Cardiac septum (tissue), 1 donor: ENCODE measurements at regions of chr3 and their contacts with region 1.

Region 1: GRCh38 chr3:112642912-112643506 is 2.1 kb upstream of the CCDC80 start:
- DNase-seq: peak; percentile 89

Region 2: GRCh38 chr3:112582244-112582874 is 60.6 kb before region 1 on chr3:
- intact Hi-C with region 1: loop called (anchors 5 kb)
- DNase-seq: no peak

Region 3: GRCh38 chr3:112605285-112605684 is 37.7 kb before region 1 on chr3:
- intact Hi-C with region 1: no loop called
- DNase-seq: no peak

Region 4: DNA sequence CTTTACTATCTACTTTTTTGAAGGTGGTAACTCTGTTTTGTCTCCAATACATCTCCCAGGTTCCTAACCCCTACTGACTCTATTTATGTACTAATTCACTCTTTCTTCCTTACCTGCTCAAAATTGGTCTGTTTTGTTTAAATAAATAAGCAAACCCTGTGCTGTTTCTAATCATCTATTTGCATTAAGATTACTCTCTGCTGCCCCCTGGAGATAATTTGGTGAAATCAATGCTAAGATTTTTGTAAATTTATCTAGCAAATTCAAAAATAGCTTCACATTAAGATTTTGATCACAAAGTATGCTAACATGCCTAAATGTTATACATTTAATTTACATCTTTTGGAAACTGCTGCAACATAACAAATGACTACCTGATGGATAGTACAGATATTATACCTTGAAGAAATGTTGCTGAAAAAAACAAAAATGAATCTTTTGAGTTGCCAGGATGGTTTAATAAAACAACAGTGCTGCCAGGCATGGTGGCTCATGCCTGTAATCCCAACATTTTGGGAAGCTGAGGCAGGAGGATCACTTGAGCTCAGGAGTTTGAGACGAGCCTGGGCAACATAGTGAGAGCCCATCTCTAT is 336.3 kb after region 1 on chr3:
- intact Hi-C with region 1: loop called (anchors 2 kb)
- DNase-seq: no peak